K562 (cell line): ENCODE measurements at regions of chr10 and their contacts with region 1.

Region 1: DNA sequence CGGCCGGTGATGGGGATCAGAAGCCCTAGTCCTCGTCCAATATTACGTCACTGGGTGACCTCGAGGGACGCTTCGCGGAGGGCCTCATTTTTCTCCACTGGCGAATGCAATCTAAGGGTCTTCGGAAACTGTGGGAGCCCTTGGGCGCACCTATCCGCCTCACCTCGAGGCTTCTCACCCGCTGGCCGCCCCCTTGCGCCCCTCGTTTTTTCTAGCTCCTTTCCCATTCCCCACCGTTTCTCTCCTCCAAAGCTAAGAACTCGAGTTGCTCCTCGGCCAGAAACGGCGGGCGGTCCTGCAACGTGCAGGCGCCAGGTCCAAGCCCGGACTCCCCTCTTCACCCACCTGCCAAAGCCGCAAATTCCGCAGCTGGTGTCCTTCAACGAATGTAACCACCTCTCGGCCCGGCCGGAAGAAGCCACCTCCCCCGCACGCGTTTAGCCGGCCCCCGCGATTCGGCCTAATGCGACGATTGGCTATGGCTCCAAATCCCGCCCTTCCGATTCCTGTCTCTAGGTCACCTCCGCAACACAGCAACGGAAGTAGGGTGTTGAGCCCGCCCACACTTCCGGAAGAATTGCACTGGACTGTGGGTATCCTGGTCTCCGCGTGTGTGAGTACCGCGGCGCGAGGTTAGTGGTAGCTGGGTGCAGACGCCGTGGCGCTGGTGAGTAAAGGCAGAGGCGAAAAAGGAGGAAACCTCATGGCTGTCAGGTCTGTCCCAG is at the starts of genes ATP5MK and PDCD11:
- DNase-seq: peak; percentile 86 to 98 (median 90)
- ATAC-seq: peak; percentile 97
- H3K4me3 ChIP-seq: peak within 1 kb of the TSS; percentile 74
- H3K27ac ChIP-seq: peak within 1 kb of the TSS; percentile 81
- H3K4me1 ChIP-seq: peaks cover 10 to 15% of the 10 kb centered on the region in 2 experiments; a peak in 4 of 5 replicates
- H3K27me3 ChIP-seq: no peaks in the 10 kb centered on the region
- CTCF ChIP-seq: peak; percentile 8 to 36 (median 23); a peak in 3 of 6 replicates
- EP300 ChIP-seq: peak; percentile 12; the same call in 1 of the 2 replicates
- POLR2A ChIP-seq: peak; percentile 92
- RAD21 ChIP-seq: no peak
- polyA plus RNA-seq, gene ATP5MK: 1,599 to 1,810 TPM
- polyA plus RNA-seq, gene PDCD11: 14.8 to 18.8 TPM

Region 2: GRCh38 chr10:103350501-103351260 is 45.5 kb before region 1 on chr10 and contains the start of gene PCGF6:
- CTCF ChIA-PET with region 1: no interaction called
- POLR2A ChIA-PET with region 1: no interaction called
- in situ Hi-C with region 1: no loop called
- intact Hi-C with region 1: loop called (anchors 5 kb)
- DNase-seq: peak; percentile 84 to 90 (median 88)
- ATAC-seq: peak; percentile 94
- H3K4me3 ChIP-seq: peak within 1 kb of the TSS; percentile 75
- H3K27ac ChIP-seq: peak within 1 kb of the TSS; percentile 87
- H3K4me1 ChIP-seq: peaks cover 0 to 21% of the 10 kb centered on the region in 2 experiments; a peak in 3 of 5 replicates
- H3K27me3 ChIP-seq: no peaks in the 10 kb centered on the region
- CTCF ChIP-seq: no peak
- EP300 ChIP-seq: no peak
- POLR2A ChIP-seq: peak; percentile 66
- RAD21 ChIP-seq: no peak
- polyA plus RNA-seq, gene PCGF6: 8.4 to 10.2 TPM

Region 3: DNA sequence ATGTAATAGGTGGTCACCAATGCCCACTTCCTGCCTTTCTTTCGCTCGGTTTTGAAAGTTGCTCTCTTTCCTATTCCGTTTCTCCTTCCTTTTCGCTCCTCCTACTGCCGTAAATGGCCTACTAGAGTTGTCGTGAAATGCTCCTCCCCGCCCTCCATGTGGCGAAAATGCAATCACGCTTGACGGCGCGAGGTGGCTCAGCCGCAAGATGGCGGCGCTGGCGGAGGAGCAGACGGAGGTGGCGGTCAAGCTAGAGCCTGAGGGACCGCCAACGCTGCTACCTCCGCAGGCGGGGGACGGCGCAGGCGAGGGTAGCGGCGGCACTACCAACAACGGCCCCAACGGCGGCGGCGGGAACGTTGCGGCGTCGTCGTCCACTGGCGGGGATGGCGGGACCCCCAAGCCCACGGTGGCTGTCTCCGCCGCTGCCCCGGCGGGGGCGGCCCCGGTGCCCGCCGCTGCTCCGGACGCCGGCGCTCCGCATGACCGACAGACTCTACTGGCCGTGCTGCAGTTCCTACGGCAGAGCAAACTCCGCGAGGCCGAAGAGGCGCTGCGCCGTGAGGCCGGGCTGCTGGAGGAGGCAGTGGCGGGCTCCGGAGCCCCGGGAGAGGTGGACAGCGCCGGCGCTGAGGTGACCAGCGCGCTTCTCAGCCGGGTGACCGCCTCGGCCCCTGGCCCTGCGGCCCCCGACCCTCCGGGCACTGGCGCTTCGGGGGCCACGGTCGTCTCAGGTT is 28.3 kb before region 1 on chr10 and contains the start of gene TAF5:
- CTCF ChIA-PET with region 1: no interaction called
- POLR2A ChIA-PET with region 1: interaction called, 4 read pairs
- in situ Hi-C with region 1: no loop called
- intact Hi-C with region 1: loop called (anchors 1 kb)
- DNase-seq: peak; percentile 79 to 94 (median 84)
- ATAC-seq: peak; percentile 87
- H3K4me3 ChIP-seq: peak within 1 kb of the TSS; percentile 93
- H3K27ac ChIP-seq: peak within 1 kb of the TSS; percentile 81
- H3K4me1 ChIP-seq: peaks cover 0 to 9% of the 10 kb centered on the region in 2 experiments; a peak in 3 of 5 replicates
- H3K27me3 ChIP-seq: no peaks in the 10 kb centered on the region
- CTCF ChIP-seq: no peak
- EP300 ChIP-seq: no peak
- POLR2A ChIP-seq: peak; percentile 95
- RAD21 ChIP-seq: no peak
- polyA plus RNA-seq, gene TAF5: 4.2 to 5.5 TPM